ENCODE measurements at regions of chr1 and their contacts with region 1.

Region 1: GRCh38 chr1:220046052-220046930 is at the start of gene EPRS1:
- DNase-seq: peak; percentile 92 to 96
- ATAC-seq: peak; percentile 97
- total RNA-seq, gene EPRS1: 68.4 to 79.5 TPM

Region 2: DNA sequence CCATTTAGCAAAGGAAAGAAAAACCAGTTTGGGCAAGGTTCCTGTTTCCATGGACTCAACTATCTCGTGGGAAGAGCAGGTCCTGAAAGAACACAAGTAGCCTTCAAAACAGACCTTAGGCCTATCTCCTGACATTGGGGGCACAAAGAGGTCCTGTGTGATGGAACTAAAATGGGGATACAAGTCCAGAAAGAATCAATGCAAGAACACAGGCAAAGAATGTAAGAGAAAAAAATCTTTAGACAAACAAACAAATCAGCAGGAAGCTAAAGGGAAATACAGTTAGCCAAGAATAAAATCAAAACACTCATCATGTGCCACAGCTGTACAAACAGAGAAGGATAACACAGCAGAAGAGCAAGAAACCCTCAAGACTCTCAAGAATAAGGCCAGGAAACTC is 146.1 kb before region 1 on chr1:
- intact Hi-C with region 1: no loop called
- DNase-seq: no peak
- ATAC-seq: no peak

Region 3: GRCh38 chr1:219965285-219966070 is 80.8 kb before region 1 on chr1:
- intact Hi-C with region 1: no loop called
- DNase-seq: no peak
- ATAC-seq: no peak

Region 4: DNA sequence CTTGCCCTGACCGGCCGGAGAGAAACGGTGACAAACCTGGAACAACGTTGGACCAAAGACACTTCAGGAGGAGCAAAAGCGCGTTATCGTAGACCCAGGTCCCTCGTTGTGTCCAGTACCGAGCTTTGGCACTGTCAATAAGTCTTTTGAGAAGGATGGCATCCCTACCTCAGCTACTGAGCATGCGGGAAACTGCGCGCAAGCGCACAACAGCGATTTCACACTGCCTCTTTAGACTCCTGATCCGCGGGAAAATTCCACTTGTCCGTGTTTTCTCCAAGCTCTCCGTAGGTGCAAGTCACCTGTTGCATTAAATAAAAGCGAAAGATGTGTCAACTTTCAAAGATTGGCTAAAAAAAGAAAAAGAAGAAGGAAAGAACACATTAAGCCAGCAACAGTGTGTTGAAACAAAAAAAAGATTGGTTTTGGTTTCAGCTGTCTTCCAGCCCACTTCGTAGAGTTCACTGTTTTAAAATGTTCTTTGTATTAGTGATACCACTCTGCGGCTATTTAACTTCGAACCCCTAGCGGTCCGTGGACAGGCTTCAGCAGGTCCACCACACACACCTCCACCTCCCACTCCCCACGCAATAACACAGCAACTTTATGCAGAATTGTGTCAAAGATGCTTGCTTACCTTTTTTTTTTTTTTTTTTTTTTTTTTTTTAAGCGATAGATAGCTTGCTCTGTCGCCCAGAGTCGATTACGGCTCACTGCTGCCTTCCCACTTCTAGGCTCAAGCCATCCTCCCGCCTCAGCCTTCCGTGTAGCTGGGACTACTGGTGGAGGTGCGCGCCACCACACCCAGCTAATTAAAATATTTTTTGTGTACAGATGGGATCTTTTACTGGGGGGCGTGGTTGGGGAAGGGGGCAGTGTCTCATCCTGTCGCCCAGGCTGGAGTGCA is 43.6 kb after region 1 on chr1 and contains the start of gene BPNT1:
- intact Hi-C with region 1: loop called in 1 of 2 experiments (anchors 5 kb)
- DNase-seq: peak; percentile 96 to 99
- ATAC-seq: peak; percentile 76
- total RNA-seq, gene BPNT1: 57.4 to 67.9 TPM